ENCODE measurements at regions of chr9 and their contacts with region 1.

Region 1: GRCh38 chr9:98775831-98776441 is 20.4 kb downstream of the ANKS6 start:
- DNase-seq: peak; percentile 54
- H3K4me3 Mint-ChIP-seq: no peak overlapping the region
- H3K27ac Mint-ChIP-seq: no peak overlapping the region
- H3K4me1 Mint-ChIP-seq: no peaks in the 10 kb centered on the region
- H3K27me3 Mint-ChIP-seq: no peaks in the 10 kb centered on the region

Region 2: GRCh38 chr9:98315551-98316060 is 460.3 kb before region 1 on chr9:
- CTCF ChIA-PET with region 1: interaction called, 66 read pairs
- DNase-seq: peak; percentile 89
- H3K4me3 Mint-ChIP-seq: no peak overlapping the region
- H3K27ac Mint-ChIP-seq: no peak overlapping the region
- H3K4me1 Mint-ChIP-seq: peaks cover 5% of the 10 kb centered on the region
- H3K27me3 Mint-ChIP-seq: peaks cover 22% of the 10 kb centered on the region

Region 3: GRCh38 chr9:98536542-98537173 is 239.3 kb before region 1 on chr9:
- CTCF ChIA-PET with region 1: interaction called, 31 read pairs
- DNase-seq: peak; percentile 63
- H3K4me3 Mint-ChIP-seq: no peak overlapping the region
- H3K27ac Mint-ChIP-seq: no peak overlapping the region
- H3K4me1 Mint-ChIP-seq: no peaks in the 10 kb centered on the region
- H3K27me3 Mint-ChIP-seq: peaks cover 41% of the 10 kb centered on the region

Region 4: DNA sequence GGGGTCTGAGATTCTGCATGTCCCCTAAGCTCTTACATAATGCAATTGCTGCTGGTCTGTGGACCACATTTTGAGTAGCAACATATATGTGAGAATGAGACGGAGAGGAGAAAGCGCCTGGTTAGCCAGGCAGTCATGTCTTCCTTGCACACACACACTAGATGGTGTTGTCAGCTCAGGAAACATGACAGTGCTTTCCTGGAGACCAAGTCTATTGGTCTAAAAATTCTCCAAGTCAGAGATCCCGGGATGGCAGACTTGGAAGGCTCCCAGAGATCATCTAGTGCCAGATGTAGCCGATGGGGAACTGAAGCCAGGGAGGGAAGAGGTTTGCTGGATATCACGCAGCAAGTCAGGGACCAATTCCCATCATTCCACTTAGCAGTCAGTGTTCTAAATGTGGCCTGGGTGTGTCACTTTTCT is 84.9 kb after region 1 on chr9:
- CTCF ChIA-PET with region 1: no interaction called
- DNase-seq: no peak
- H3K4me3 Mint-ChIP-seq: no peak overlapping the region
- H3K27ac Mint-ChIP-seq: no peak overlapping the region
- H3K4me1 Mint-ChIP-seq: no peaks in the 10 kb centered on the region
- H3K27me3 Mint-ChIP-seq: peaks cover 72% of the 10 kb centered on the region

Region 5: DNA sequence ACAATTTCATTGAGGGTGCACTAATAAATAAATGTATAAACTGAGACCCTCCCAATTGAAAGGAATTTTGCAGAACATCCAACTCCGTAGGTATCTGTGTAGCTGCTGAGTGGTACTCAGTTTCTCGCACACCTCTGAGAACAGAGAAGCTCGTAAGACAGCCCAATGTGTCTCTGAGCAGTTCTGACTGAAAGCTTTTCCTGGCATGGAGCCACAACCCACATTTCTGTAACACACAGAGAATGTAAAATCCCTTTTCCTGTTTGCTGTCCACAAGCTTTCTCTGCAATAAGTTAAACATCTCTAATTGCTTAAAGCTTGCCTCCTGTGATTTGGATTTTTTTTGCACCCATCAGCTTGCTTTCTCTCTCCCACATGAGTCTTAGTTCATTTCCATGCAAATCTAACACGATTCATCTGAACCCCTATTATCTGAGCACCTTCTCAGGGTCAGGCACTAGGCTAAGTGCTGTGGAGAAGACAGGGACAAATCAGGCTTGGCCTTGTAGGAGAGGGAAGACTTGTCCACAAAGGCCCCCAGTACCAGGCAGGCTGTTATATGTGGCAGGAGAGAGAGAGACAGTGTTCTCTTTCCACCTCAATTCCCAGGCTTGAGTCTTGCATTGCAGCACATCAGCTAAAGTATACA is 123.6 kb after region 1 on chr9:
- CTCF ChIA-PET with region 1: no interaction called
- DNase-seq: no peak
- H3K4me3 Mint-ChIP-seq: no peak overlapping the region
- H3K27ac Mint-ChIP-seq: no peak overlapping the region
- H3K4me1 Mint-ChIP-seq: no peaks in the 10 kb centered on the region
- H3K27me3 Mint-ChIP-seq: peaks cover 23% of the 10 kb centered on the region